GM10248 (cell line): ENCODE measurements at regions of chr4 and their contacts with region 1.

Region 1: GRCh38 chr4:15738877-15739276 is 36.0 kb downstream of the BST1 start:
- DNase-seq: no peak
- CTCF ChIP-seq: no peak

Region 2: GRCh38 chr4:15756361-15756861 is 17.5 kb after region 1 on chr4:
- CTCF ChIA-PET with region 1: interaction called, 17 read pairs
- POLR2A ChIA-PET with region 1: no interaction called
- DNase-seq: peak; percentile 38
- CTCF ChIP-seq: peak; percentile 27

Region 3: DNA sequence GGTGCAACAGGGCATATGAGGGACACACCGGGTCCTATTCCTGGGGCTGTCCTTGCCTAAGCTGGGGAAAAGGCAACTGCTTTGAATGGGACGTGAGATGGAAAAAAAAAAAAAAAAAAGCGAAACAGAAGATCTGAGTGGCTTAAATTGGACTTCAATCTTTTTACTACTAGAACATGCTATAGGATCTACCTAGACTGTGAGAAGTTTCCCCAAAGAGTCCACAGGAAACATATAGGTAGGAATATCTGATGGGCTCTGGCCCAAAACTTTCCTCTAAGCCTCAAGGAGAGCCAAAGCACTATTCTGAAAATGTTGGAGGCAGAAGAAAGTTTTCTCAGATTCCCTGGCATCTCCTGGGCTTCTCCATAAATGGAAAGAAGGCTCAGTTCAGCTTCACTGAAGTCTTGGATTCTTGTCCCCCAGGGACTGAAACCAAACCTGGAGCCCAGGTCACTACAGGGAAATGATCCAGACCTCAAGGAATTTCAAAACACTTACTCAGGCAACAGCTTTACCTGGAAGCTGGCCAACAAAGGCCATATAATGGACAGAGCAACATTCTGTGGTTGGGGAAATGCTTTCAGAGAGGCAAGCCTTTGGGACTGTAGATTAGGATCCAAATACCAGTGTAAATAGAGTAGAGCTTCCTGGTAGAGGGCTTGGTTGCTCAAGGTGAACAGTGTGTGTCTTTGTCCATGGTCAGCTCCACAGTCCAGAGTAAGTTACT is 401.8 kb after region 1 on chr4:
- CTCF ChIA-PET with region 1: no interaction called
- POLR2A ChIA-PET with region 1: no interaction called
- DNase-seq: no peak
- CTCF ChIP-seq: no peak